ENCODE measurements at regions of chr2 and their contacts with region 1.

Region 1: DNA sequence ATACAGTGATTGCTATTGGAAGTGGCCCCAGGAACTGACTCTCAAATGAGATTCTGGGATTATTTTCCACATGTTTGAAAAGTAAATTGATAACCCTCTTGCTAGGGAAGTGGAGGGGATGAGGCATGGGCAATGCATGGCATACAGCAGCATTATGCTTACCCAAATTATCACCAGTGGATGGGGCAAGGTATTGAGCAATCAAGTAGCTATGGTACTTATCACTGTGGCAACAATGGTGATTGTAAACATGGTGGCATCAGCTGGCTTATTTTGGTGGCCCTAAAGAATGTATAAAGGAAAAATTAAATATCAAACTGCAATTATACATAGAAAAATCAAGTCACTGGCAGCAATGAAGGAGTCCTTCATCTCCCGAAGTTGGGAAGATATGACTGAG is 155.0 kb downstream of the FIGN start:
- DNase-seq: no peak
- ATAC-seq: no peak
- H3K4me3 ChIP-seq: no peak overlapping the region
- H3K27ac ChIP-seq: no peak overlapping the region
- H3K4me1 ChIP-seq: no peaks in the 10 kb centered on the region
- H3K27me3 ChIP-seq: no peaks in the 10 kb centered on the region
- CTCF ChIP-seq: no peak

Region 2: GRCh38 chr2:163505281-163505680 is 75.5 kb before region 1 on chr2:
- intact Hi-C with region 1: no loop called
- DNase-seq: no peak
- ATAC-seq: no peak
- H3K4me3 ChIP-seq: no peak overlapping the region
- H3K27ac ChIP-seq: no peak overlapping the region
- H3K4me1 ChIP-seq: no peaks in the 10 kb centered on the region
- H3K27me3 ChIP-seq: no peaks in the 10 kb centered on the region
- CTCF ChIP-seq: no peak

Region 3: DNA sequence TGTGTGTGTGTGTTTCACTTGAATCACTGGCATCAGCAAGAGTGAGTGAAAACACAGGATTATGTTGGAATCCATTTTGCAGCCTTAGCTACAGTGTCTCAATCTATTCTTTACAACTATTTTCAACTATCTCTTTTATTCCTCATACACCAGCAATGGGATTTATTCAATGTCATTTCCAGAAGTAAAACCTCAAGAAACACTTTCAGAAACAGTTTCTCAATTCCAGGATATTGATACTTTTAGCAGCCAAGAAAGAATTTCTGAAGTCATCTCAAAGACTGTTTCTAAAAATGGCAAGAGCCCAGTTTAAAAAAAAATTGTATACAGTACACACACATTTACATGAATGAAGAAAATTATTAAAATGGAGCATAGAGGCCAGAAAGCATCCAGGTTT is 16.5 kb before region 1 on chr2:
- intact Hi-C with region 1: loop called in 1 of 2 experiments (anchors 1 kb)
- DNase-seq: no peak
- ATAC-seq: no peak
- H3K4me3 ChIP-seq: no peak overlapping the region
- H3K27ac ChIP-seq: no peak overlapping the region
- H3K4me1 ChIP-seq: no peaks in the 10 kb centered on the region
- H3K27me3 ChIP-seq: no peaks in the 10 kb centered on the region
- CTCF ChIP-seq: no peak

Region 4: DNA sequence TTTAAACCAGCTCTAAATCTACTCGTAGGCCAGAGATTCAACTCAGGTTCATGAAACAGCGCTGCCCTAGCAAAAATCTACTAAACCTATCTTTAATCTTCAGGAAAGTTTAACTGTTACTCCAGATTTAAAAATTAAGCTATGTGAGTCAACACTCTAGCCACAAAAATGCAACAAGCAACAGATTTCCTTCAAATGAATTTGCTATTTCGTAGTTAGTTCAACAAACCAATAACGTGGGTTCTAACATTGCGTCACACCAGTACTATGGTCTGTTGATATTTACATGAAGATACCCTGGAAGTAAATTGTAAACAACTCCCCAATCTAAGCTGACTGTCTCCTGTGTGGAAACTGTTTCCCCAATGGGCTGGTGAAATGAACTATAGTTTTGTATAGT is 83.8 kb after region 1 on chr2:
- intact Hi-C with region 1: no loop called
- DNase-seq: no peak
- ATAC-seq: no peak
- H3K4me3 ChIP-seq: no peak overlapping the region
- H3K27ac ChIP-seq: no peak overlapping the region
- H3K4me1 ChIP-seq: no peaks in the 10 kb centered on the region
- H3K27me3 ChIP-seq: no peaks in the 10 kb centered on the region
- CTCF ChIP-seq: no peak